Colonic mucosa (tissue), 4 donors: ENCODE measurements at regions of chr7 and their contacts with region 1.

Region 1: DNA sequence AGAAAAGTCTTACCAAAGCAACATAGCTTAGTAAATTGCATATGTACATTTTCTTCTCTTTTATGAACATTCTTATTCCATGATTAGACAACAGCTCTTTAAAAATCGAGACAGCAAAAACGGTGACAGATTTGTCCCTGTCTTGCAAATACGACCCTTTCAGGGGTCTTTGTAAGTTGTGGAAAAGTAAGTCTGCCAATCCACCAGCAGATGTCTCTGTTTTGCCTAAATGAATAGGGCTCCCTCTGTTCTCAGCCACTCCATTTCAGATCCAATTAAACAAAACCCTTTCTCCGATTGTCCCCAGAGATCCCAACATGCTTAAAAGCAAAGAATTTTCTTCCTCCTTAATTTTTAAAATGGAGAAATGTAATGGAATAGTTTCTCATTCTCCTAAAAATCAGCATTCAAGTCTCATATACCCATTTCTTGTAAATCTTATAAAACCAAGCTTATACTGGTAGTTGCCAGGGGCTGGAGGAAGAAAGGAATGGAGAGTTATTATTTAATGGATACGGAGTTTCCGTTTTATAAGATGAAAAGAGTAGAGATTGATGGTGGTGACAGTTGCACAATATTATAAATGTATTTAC is 61.0 kb upstream of the NFE2L3 start:
- DNase-seq: no peak
- H3K4me3 ChIP-seq: no peak overlapping the region
- H3K27ac ChIP-seq: no peak overlapping the region
- H3K4me1 ChIP-seq: peaks cover 5% of the 10 kb centered on the region
- H3K27me3 ChIP-seq: no peaks in the 10 kb centered on the region
- CTCF ChIP-seq: peak; percentile 47

Region 2: GRCh38 chr7:25333296-25333928 is 757.6 kb before region 1 on chr7:
- intact Hi-C with region 1: no loop called
- DNase-seq: no peak
- H3K4me3 ChIP-seq: no peak overlapping the region
- H3K27ac ChIP-seq: no peak overlapping the region
- H3K4me1 ChIP-seq: no peaks in the 10 kb centered on the region
- H3K27me3 ChIP-seq: no peaks in the 10 kb centered on the region
- CTCF ChIP-seq: no peak

Region 3: DNA sequence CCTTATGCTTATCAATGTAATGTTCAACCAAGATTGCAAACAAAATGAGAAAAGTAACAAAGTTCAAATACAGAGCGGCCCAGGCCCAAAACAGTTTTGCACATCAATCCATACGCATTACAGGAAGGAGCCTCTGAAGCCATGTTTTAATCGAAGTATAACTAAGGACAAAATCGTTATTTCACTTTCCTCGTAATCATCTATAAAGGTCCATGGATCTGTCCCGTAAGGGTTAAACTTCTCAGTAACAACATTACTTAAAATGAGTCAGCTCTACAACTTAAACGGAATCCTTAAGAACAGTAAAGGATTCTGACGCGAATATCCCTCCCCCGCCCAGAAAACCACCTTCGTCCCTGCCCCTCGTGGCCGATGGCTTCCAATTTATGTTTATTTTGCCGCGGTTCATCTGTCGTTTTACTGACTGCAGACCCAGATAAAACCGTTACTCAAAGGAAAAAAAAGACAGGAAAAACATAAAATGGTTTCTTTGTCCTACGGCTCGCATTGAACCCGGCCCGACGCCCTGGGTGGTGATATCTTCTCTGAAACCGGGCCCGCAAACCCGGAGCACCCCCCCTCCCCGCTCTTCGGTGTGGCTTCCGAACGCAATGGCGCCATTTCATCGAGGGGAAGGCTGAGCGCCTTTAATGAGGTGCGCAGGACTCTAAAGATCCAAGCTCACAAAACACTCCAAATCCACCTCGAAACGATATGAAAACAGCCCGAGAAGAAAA is 108.4 kb after region 1 on chr7:
- intact Hi-C with region 1: loop called (anchors 5 kb)
- DNase-seq: peak; percentile 67
- H3K4me3 ChIP-seq: peak overlapping the region; percentile 90
- H3K27ac ChIP-seq: peak overlapping the region; percentile 100
- H3K4me1 ChIP-seq: peaks cover 15% of the 10 kb centered on the region
- H3K27me3 ChIP-seq: no peaks in the 10 kb centered on the region
- CTCF ChIP-seq: no peak